PC-9 (cell line): ENCODE measurements at regions of chr10 and their contacts with region 1.

Region 1: GRCh38 chr10:94362360-94363250 is at the start of gene NOC3L:
- DNase-seq: peak; percentile 79 to 88
- H3K4me3 ChIP-seq: peak within 1 kb of the TSS; percentile 83
- H3K27ac ChIP-seq: peak within 1 kb of the TSS; percentile 51
- H3K4me1 ChIP-seq: peaks cover 27% of the 10 kb centered on the region
- H3K27me3 ChIP-seq: no peaks in the 10 kb centered on the region
- CTCF ChIP-seq: peak; percentile 56; the same call in 1 of the 2 replicates
- total RNA-seq, gene NOC3L: 10.5 and 17.7 TPM in 2 replicates

Region 2: DNA sequence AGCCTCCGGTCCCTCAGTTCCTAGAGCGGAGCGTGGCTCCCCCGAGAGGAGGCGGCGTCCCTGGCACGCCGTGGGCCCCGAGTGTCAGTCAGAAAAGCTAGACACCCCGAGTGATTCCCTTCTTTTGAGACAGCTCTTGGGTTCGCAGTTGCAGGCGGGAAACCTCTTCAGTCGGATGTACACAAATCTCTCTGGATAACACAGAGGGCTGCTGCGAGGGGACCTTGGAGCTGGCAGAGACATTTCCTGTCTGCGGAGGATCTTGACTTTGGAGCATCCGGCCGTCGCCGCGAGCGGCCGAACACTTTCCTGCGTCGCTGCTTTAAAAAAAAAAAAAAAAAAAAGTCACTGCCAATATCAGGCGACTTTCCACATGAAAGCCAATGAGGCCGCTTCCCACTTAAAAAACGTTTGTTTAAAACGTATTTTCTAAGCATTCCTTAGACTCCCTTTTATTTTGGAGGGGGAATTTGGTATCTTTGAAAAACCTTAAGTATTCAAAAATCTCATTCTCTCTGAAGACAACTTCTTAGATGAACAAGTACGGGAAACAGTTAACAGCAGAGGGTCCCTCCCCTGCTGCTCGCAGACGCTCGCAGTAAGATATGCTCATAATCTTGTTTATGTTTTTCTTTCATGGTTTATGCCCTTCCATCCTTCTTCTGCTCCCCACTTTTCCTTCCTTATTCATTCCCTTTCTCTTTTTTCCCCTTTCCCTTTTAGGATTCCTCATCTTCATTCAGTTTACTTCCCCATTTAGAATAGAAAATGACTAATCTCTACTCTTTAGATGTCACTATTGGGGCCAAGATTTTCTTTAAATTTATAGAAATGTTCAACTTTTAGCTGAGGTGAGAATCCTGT is 1662.9 kb before region 1 on chr10:
- CTCF ChIA-PET with region 1: no interaction called
- POLR2A ChIA-PET with region 1: interaction called, 12 read pairs
- intact Hi-C with region 1: no loop called
- DNase-seq: peak in 1 of 2 experiments; percentile 10
- H3K4me3 ChIP-seq: peak overlapping the region; percentile 48; the same call in 1 of the 2 replicates
- H3K27ac ChIP-seq: no peak overlapping the region
- H3K4me1 ChIP-seq: no peaks in the 10 kb centered on the region
- H3K27me3 ChIP-seq: no peaks in the 10 kb centered on the region
- CTCF ChIP-seq: no peak

Region 3: GRCh38 chr10:93711891-93712290 is 650.7 kb before region 1 on chr10:
- CTCF ChIA-PET with region 1: no interaction called
- POLR2A ChIA-PET with region 1: interaction called, 16 read pairs
- intact Hi-C with region 1: no loop called
- DNase-seq: no peak
- H3K4me3 ChIP-seq: no peak overlapping the region
- H3K27ac ChIP-seq: no peak overlapping the region
- H3K4me1 ChIP-seq: no peaks in the 10 kb centered on the region
- H3K27me3 ChIP-seq: no peaks in the 10 kb centered on the region
- CTCF ChIP-seq: no peak

Region 4: GRCh38 chr10:93893646-93894515 is 468.7 kb before region 1 on chr10 and contains the start of gene SLC35G1:
- CTCF ChIA-PET with region 1: no interaction called
- POLR2A ChIA-PET with region 1: interaction called, 18 read pairs
- intact Hi-C with region 1: no loop called
- DNase-seq: peak; percentile 43 to 45
- H3K4me3 ChIP-seq: peak within 1 kb of the TSS; percentile 78
- H3K27ac ChIP-seq: no peak within 1 kb of the TSS
- H3K4me1 ChIP-seq: peaks cover 5% of the 10 kb centered on the region; the same call in 1 of the 2 replicates
- H3K27me3 ChIP-seq: no peaks in the 10 kb centered on the region
- CTCF ChIP-seq: no peak
- total RNA-seq, gene SLC35G1: 3.7 and 4.1 TPM in 2 replicates

Region 5: DNA sequence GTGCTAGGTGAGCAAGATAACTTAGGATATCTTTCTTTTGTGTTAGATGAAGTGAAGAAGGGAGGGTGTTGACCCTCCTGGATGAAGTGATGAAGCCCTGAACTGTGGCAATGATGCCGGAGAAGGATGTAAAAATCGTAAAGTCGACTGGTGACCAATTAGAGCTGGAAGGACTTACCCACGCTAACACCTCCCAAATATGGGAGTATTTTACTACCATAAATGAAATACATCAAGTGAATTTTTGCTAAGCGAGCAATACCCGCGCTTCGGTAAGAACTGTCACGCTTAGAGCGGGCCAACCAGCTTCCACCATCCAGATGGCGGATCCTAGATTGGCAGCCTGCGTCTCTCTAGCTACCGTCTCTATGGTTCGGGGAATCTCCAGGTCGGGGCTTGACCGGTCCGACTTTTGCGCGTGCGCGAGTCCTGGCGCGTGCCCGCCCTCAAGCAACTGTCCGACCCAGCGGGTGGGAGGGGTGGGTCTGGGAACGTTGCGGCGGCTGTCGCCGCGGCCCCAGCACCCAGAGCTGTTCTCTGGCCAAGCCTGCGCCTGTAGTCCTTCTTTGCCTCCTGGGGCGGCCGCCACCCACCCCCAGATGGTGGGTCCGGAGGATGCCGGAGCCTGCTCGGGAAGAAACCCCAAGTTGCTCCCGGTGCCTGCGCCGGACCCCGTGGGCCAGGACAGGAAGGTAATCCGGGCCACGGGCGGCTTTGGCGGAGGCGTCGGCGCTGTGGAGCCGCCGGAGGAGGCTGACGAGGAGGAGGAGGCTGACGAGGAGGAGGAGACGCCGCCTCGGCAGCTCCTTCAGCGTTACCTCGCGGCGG is 39.6 kb after region 1 on chr10 and contains the start of gene TBC1D12:
- CTCF ChIA-PET with region 1: no interaction called
- POLR2A ChIA-PET with region 1: interaction called, 8 read pairs
- intact Hi-C with region 1: loop called (anchors 1 kb)
- DNase-seq: peak; percentile 82 to 90
- H3K4me3 ChIP-seq: peak within 1 kb of the TSS; percentile 76
- H3K27ac ChIP-seq: peak within 1 kb of the TSS; percentile 56
- H3K4me1 ChIP-seq: peaks cover 23% of the 10 kb centered on the region; the same call in 1 of the 2 replicates
- H3K27me3 ChIP-seq: no peaks in the 10 kb centered on the region
- CTCF ChIP-seq: no peak
- total RNA-seq, gene TBC1D12: 3.1 and 3.9 TPM in 2 replicates

Region 6: GRCh38 chr10:94439275-94439861 is 76.8 kb after region 1 on chr10:
- CTCF ChIA-PET with region 1: interaction called, 3 read pairs
- POLR2A ChIA-PET with region 1: no interaction called
- intact Hi-C with region 1: loop called (anchors 10 kb)
- DNase-seq: no peak
- H3K4me3 ChIP-seq: no peak overlapping the region
- H3K27ac ChIP-seq: no peak overlapping the region
- H3K4me1 ChIP-seq: no peaks in the 10 kb centered on the region
- H3K27me3 ChIP-seq: no peaks in the 10 kb centered on the region
- CTCF ChIP-seq: no peak

Region 7: DNA sequence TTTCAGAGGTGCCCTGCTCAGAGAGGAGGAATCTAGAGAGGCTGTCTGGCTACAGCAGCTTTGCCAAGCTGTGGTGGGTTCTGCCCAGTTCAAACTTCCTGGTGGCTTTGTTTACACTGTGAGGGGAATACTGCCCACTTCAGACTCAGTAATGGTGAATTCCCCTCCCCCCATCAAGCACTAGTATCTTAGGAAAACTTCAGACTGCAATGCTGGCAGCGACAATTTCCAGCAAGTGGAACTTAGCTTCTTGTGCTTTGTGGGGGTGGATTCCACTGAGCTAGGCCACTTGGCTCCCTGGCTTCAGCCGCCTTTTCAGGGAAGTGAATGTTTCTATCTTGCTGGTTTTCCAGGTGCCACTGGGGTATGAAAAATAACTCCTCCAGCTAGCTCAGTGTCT is 663.9 kb after region 1 on chr10:
- CTCF ChIA-PET with region 1: no interaction called
- POLR2A ChIA-PET with region 1: no interaction called
- intact Hi-C with region 1: no loop called
- DNase-seq: no peak
- H3K4me3 ChIP-seq: no peak overlapping the region
- H3K27ac ChIP-seq: no peak overlapping the region
- H3K4me1 ChIP-seq: no peaks in the 10 kb centered on the region
- H3K27me3 ChIP-seq: no peaks in the 10 kb centered on the region
- CTCF ChIP-seq: no peak